Transverse colon (tissue), 4 donors: ENCODE measurements at regions of chr10 and their contacts with region 1.

Region 1: DNA sequence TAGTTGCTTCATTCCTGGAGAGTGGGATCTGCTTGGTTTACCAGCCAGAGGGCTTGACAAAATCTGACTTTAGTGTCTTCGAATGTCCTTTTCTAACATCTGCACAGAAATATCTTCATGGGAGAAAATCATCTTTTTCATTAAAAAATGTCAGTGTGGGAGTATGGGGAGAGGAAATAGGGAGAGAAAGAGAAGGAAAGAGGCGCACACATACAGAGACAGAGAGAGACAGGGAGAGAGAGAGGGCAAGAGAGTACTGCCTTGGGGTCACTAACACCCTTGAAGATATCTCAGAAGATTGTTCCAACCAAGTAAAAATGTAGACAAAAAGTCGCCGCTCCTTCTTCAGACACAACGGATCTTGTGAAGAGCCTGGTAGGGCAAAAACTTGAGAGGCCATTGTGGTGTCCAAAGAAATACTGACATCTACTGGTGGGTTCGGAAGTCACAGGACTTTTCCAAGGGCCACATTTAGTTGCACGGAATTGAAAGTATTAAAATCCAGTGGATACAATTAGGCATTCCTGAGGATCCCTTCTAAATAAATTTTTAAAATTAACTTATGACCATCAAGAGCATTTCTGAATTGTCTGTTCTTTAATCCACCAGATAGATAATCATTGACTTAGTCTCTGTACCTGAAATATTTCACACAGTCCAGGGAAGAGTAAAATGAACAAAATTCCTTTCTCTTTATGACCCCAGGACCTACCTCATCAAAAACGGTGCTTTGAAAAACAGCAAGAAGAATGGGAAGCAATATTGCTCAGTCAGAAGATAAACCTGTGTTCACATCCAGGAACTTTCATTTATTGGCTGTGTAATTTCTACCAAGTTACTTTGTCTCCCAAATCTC is 29.7 kb downstream of the VIM start:
- DNase-seq: peak; percentile 50
- H3K4me3 ChIP-seq: no peak overlapping the region
- H3K27ac ChIP-seq: no peak overlapping the region
- H3K4me1 ChIP-seq: peaks cover 0 to 7% (median 4%) of the 10 kb centered on the region in 4 donors
- H3K27me3 ChIP-seq: no peaks in the 10 kb centered on the region
- CTCF ChIP-seq: peak; percentile 78 to 87 (median 84)
- EP300 ChIP-seq: no peak
- POLR2A ChIP-seq: no peak

Region 2: GRCh38 chr10:16843252-16843870 is 414.3 kb before region 1 on chr10:
- in situ Hi-C with region 1: loop called (anchors 5 to 10 kb)
- intact Hi-C with region 1: loop called (anchors 5 kb)
- DNase-seq: no peak
- H3K4me3 ChIP-seq: no peak overlapping the region
- H3K27ac ChIP-seq: no peak overlapping the region
- H3K4me1 ChIP-seq: no peaks in the 10 kb centered on the region
- H3K27me3 ChIP-seq: no peaks in the 10 kb centered on the region
- CTCF ChIP-seq: peak; percentile 45 to 65 (median 61)
- EP300 ChIP-seq: no peak
- POLR2A ChIP-seq: no peak

Region 3: GRCh38 chr10:16848562-16849154 is 409.0 kb before region 1 on chr10:
- in situ Hi-C with region 1: loop called (anchors 5 to 10 kb)
- intact Hi-C with region 1: loop called (anchors 5 kb)
- DNase-seq: no peak
- H3K4me3 ChIP-seq: no peak overlapping the region
- H3K27ac ChIP-seq: no peak overlapping the region
- H3K4me1 ChIP-seq: no peaks in the 10 kb centered on the region
- H3K27me3 ChIP-seq: no peaks in the 10 kb centered on the region
- CTCF ChIP-seq: no peak
- EP300 ChIP-seq: no peak
- POLR2A ChIP-seq: no peak

Region 4: DNA sequence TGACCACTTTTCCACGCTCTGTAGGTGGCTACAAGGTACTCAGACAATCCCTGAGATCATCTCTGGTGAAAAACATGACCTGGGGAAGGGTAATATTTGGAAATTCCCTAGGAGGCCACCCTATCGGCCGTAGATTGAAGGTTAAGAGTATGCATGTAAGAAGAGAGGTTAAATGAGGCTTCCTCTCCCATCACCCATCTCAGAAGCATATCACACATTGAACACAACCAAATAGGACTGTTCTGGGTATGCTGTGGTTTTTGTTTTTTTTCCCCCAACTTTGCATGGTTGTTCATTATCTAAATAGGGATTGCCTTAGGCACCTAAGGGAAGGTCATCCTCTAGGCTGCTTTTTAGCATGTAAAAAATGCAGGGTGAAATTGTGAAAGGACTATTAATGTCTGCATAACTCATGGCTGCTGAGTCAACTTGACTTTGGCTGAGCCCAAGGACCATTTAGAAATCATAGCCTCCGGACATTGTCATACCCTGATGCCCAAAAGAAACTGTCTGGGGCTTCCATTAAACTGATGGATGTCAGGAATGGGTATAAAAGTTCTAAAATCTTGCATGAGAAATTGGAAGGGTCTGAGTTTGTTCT is 221.4 kb after region 1 on chr10:
- in situ Hi-C with region 1: no loop called
- intact Hi-C with region 1: no loop called
- DNase-seq: no peak
- H3K4me3 ChIP-seq: no peak overlapping the region
- H3K27ac ChIP-seq: no peak overlapping the region
- H3K4me1 ChIP-seq: no peaks in the 10 kb centered on the region
- H3K27me3 ChIP-seq: no peaks in the 10 kb centered on the region
- CTCF ChIP-seq: no peak
- EP300 ChIP-seq: no peak
- POLR2A ChIP-seq: no peak

Region 5: GRCh38 chr10:17599089-17599488 is 341.4 kb after region 1 on chr10:
- in situ Hi-C with region 1: no loop called
- intact Hi-C with region 1: no loop called
- DNase-seq: no peak
- H3K4me3 ChIP-seq: no peak overlapping the region
- H3K27ac ChIP-seq: no peak overlapping the region
- H3K4me1 ChIP-seq: no peaks in the 10 kb centered on the region
- H3K27me3 ChIP-seq: no peaks in the 10 kb centered on the region
- CTCF ChIP-seq: peak in 1 of 5 experiments; percentile 11
- EP300 ChIP-seq: no peak
- POLR2A ChIP-seq: no peak

Region 6: GRCh38 chr10:17626656-17627055 is 369.0 kb after region 1 on chr10:
- in situ Hi-C with region 1: no loop called
- intact Hi-C with region 1: no loop called
- DNase-seq: no peak
- H3K4me3 ChIP-seq: no peak overlapping the region
- H3K27ac ChIP-seq: no peak overlapping the region
- H3K4me1 ChIP-seq: no peaks in the 10 kb centered on the region
- H3K27me3 ChIP-seq: no peaks in the 10 kb centered on the region
- CTCF ChIP-seq: no peak
- EP300 ChIP-seq: no peak
- POLR2A ChIP-seq: no peak